ENCODE measurements at regions of chr9 and their contacts with region 1.

Region 1: GRCh38 chr9:125558453-125559092 is 148.4 kb downstream of the MAPKAP1 start:
- DNase-seq: peak; percentile 74 to 76
- ATAC-seq: peak; percentile 80 to 94; a peak in 5 of 6 replicates
- H3K4me3 ChIP-seq: no peak overlapping the region
- H3K27ac ChIP-seq: no peak overlapping the region
- H3K4me1 ChIP-seq: no peaks in the 10 kb centered on the region
- CTCF ChIP-seq: peak; percentile 82
- EP300 ChIP-seq: no peak
- POLR2A ChIP-seq: no peak
- RAD21 ChIP-seq: peak; percentile 79 to 85

Region 2: GRCh38 chr9:125536208-125536635 is 22.4 kb before region 1 on chr9:
- CTCF ChIA-PET with region 1: interaction called, 17 read pairs
- POLR2A ChIA-PET with region 1: no interaction called
- DNase-seq: no peak
- ATAC-seq: no peak
- H3K4me3 ChIP-seq: no peak overlapping the region
- H3K27ac ChIP-seq: peak overlapping the region; percentile 77 to 85; a peak in 5 of 6 replicates
- H3K4me1 ChIP-seq: peaks cover 69% of the 10 kb centered on the region
- CTCF ChIP-seq: no peak
- EP300 ChIP-seq: no peak
- POLR2A ChIP-seq: no peak
- RAD21 ChIP-seq: no peak

Region 3: DNA sequence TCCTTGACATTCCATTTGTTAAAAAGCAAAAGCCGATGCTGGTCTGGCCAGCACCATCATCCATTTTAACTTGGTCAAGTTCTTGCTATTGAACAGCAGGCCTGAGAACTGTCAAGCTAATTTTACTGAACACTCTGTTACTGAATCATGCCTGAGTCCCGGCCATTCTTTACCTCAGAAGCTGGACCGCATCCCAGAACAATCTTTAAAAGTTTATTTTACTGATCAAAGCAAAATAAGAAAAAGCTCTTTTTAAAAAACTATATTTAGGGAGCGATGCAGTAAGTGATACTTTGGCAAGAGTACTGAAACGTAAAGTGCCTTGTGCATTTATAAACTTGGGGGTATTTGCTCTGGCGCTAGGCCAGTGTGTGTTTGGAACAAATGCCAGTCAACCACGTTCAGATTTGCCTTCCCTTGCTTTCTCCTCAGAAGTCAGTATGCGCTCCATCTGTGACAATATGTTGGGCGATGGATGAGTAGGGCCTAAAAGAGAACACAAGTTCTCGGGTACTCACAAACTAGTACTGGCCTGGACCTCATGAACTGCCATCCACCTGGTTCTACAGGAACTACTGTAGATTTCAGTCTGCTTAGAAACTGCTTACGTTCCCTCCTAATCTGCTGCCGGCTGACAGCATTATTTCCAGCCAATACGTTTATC is 13.5 kb before region 1 on chr9:
- CTCF ChIA-PET with region 1: interaction called, 20 read pairs
- POLR2A ChIA-PET with region 1: no interaction called
- DNase-seq: no peak
- ATAC-seq: no peak
- H3K4me3 ChIP-seq: no peak overlapping the region
- H3K27ac ChIP-seq: no peak overlapping the region
- H3K4me1 ChIP-seq: peaks cover 30% of the 10 kb centered on the region
- CTCF ChIP-seq: no peak
- EP300 ChIP-seq: no peak
- POLR2A ChIP-seq: no peak
- RAD21 ChIP-seq: no peak

Region 4: GRCh38 chr9:125568621-125569020 is 10.0 kb after region 1 on chr9:
- CTCF ChIA-PET with region 1: interaction called, 28 read pairs
- POLR2A ChIA-PET with region 1: no interaction called
- DNase-seq: no peak
- ATAC-seq: no peak
- H3K4me3 ChIP-seq: no peak overlapping the region
- H3K27ac ChIP-seq: no peak overlapping the region
- H3K4me1 ChIP-seq: no peaks in the 10 kb centered on the region
- CTCF ChIP-seq: no peak
- EP300 ChIP-seq: no peak
- POLR2A ChIP-seq: no peak
- RAD21 ChIP-seq: no peak

Region 5: GRCh38 chr9:125593585-125594229 is 35.1 kb after region 1 on chr9:
- CTCF ChIA-PET with region 1: interaction called, 13 read pairs
- POLR2A ChIA-PET with region 1: no interaction called
- DNase-seq: no peak
- ATAC-seq: no peak
- H3K4me3 ChIP-seq: no peak overlapping the region
- H3K27ac ChIP-seq: no peak overlapping the region
- H3K4me1 ChIP-seq: 0 out of 3 replicates have a peak, but pooled peaks cover 4% of the 10 kb centered on the region
- CTCF ChIP-seq: no peak
- EP300 ChIP-seq: no peak
- POLR2A ChIP-seq: no peak
- RAD21 ChIP-seq: no peak

Measured in A549 (cell line).